Activated CD4-positive, alpha-beta T cell treated with anti-CD3 and anti-CD28 coated beads for 36 hours (primary cell): ENCODE measurements at regions of chr10 and their contacts with region 1.

Region 1: GRCh38 chr10:124827474-124827873 is 25.9 kb downstream of the ABRAXAS2 start:
- DNase-seq: peak; percentile 11
- ATAC-seq: no peak
- H3K4me3 Mint-ChIP-seq: no peak overlapping the region
- H3K27ac Mint-ChIP-seq: no peak overlapping the region
- H3K4me1 Mint-ChIP-seq: peaks cover 2% of the 10 kb centered on the region
- H3K27me3 Mint-ChIP-seq: no peaks in the 10 kb centered on the region

Region 2: GRCh38 chr10:124626759-124627380 is 200.6 kb before region 1 on chr10:
- CTCF ChIA-PET with region 1: no interaction called
- POLR2A ChIA-PET with region 1: no interaction called
- intact Hi-C with region 1: loop called in 1 of 2 experiments (anchors 5 kb)
- DNase-seq: peak; percentile 70
- ATAC-seq: peak; percentile 75
- H3K4me3 Mint-ChIP-seq: no peak overlapping the region
- H3K27ac Mint-ChIP-seq: peak overlapping the region; percentile 6
- H3K4me1 Mint-ChIP-seq: peaks cover 38% of the 10 kb centered on the region
- H3K27me3 Mint-ChIP-seq: peaks cover 2% of the 10 kb centered on the region